ENCODE measurements at regions of chr3 and their contacts with region 1.

Region 1: GRCh38 chr3:134249935-134250716 is 533 bp downstream of the RYK start:
- DNase-seq: peak; percentile 27 to 93
- H3K4me3 ChIP-seq: peak overlapping the region; percentile 78
- CTCF ChIP-seq: no peak
- POLR2A ChIP-seq: no peak

Region 2: GRCh38 chr3:133742351-133743091 is 507.6 kb before region 1 on chr3:
- intact Hi-C with region 1: loop called (anchors 5 kb)
- DNase-seq: no peak
- H3K4me3 ChIP-seq: no peak overlapping the region
- CTCF ChIP-seq: no peak
- POLR2A ChIP-seq: no peak

Region 3: GRCh38 chr3:134126153-134126552 is 124.0 kb before region 1 on chr3:
- intact Hi-C with region 1: no loop called
- DNase-seq: no peak
- H3K4me3 ChIP-seq: no peak overlapping the region
- CTCF ChIP-seq: no peak
- POLR2A ChIP-seq: no peak

Measured in lower leg skin (tissue), 4 donors.